ENCODE measurements at regions of chr5 and their contacts with region 1.

Region 1: GRCh38 chr5:270340-270739 is 1.1 kb upstream of the PDCD6 start:
- DNase-seq: no peak
- H3K4me3 Mint-ChIP-seq: peak overlapping the region; percentile 87
- H3K27ac Mint-ChIP-seq: peak overlapping the region; percentile 67
- H3K4me1 Mint-ChIP-seq: peaks cover 33% of the 10 kb centered on the region
- H3K27me3 Mint-ChIP-seq: no peaks in the 10 kb centered on the region

Region 2: GRCh38 chr5:53281-54174 is 216.8 kb before region 1 on chr5:
- intact Hi-C with region 1: no loop called
- DNase-seq: peak; percentile 7
- H3K4me3 Mint-ChIP-seq: peak overlapping the region; percentile 65
- H3K27ac Mint-ChIP-seq: no peak overlapping the region
- H3K4me1 Mint-ChIP-seq: no peaks in the 10 kb centered on the region
- H3K27me3 Mint-ChIP-seq: peaks cover 17% of the 10 kb centered on the region

Region 3: GRCh38 chr5:188488-189481 is 81.6 kb before region 1 on chr5:
- intact Hi-C with region 1: loop called (anchors 1 kb)
- DNase-seq: peak; percentile 83
- H3K4me3 Mint-ChIP-seq: no peak overlapping the region
- H3K27ac Mint-ChIP-seq: no peak overlapping the region
- H3K4me1 Mint-ChIP-seq: no peaks in the 10 kb centered on the region
- H3K27me3 Mint-ChIP-seq: no peaks in the 10 kb centered on the region

Region 4: DNA sequence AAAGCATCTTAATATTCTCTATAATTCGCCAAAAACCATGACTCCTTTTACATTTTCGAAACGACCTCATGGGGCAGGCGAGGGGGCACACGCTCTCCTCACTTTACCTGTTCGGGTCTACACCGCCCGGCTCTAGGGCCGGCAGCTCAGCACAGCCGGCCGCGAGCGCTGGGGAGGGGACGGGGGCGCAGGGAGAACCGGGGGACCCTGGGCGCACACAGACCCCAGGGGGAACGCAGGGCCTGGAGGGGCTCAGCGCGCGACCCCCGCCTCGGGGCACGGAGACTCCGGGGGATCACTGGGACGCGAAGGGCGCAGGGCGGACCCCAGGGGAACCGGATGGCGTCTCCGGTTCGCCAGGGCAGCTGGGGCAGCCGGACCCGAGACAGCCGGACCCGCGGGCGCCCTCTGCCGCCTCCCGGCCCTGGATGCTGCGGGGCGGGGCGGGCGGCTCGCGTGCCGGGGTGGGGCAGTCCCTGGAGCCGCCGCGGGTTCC is 50.9 kb after region 1 on chr5 and contains the start of gene AHRR:
- intact Hi-C with region 1: loop called (anchors 1 kb)
- DNase-seq: peak; percentile 64
- H3K4me3 Mint-ChIP-seq: peak within 1 kb of the TSS; percentile 83
- H3K27ac Mint-ChIP-seq: peak within 1 kb of the TSS; percentile 44
- H3K4me1 Mint-ChIP-seq: peaks cover 14% of the 10 kb centered on the region
- H3K27me3 Mint-ChIP-seq: peaks cover 11% of the 10 kb centered on the region
- total RNA-seq, gene AHRR: 22.7 and 23.7 TPM in 2 replicates

Region 5: GRCh38 chr5:392431-392988 is 122.2 kb after region 1 on chr5:
- intact Hi-C with region 1: loop called (anchors 1 kb)
- DNase-seq: peak; percentile 87
- H3K4me3 Mint-ChIP-seq: peak overlapping the region; percentile 74
- H3K27ac Mint-ChIP-seq: peak overlapping the region; percentile 98
- H3K4me1 Mint-ChIP-seq: peaks cover 36% of the 10 kb centered on the region
- H3K27me3 Mint-ChIP-seq: peaks cover 2% of the 10 kb centered on the region

Region 6: DNA sequence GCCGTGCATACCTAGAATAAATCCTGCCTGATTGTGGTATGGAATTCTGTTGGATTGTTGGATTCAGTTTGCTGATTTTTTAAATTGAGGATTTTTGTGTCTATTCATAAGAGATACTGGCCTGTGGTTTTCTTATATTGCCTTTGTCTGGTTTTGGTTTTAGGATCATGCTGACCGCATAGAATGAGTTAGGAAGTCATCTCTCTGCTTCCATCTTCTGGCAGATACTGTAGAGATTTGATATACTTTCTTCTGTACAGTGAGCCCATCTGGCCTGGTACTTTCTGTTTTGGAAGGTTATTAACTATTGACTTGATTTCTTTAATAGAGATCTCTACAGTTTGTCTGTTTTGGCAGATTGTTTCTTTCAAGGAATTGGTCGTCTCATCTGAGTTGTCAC is 356.5 kb after region 1 on chr5:
- intact Hi-C with region 1: no loop called
- DNase-seq: no peak
- H3K4me3 Mint-ChIP-seq: no peak overlapping the region
- H3K27ac Mint-ChIP-seq: no peak overlapping the region
- H3K4me1 Mint-ChIP-seq: no peaks in the 10 kb centered on the region
- H3K27me3 Mint-ChIP-seq: no peaks in the 10 kb centered on the region

Region 7: GRCh38 chr5:1633605-1634336 is 1363.4 kb after region 1 on chr5:
- intact Hi-C with region 1: loop called (anchors 5 kb)
- DNase-seq: peak; percentile 78
- H3K4me3 Mint-ChIP-seq: peak overlapping the region; percentile 94
- H3K27ac Mint-ChIP-seq: peak overlapping the region; percentile 89
- H3K4me1 Mint-ChIP-seq: peaks cover 19% of the 10 kb centered on the region
- H3K27me3 Mint-ChIP-seq: peaks cover 3% of the 10 kb centered on the region